ENCODE measurements at regions of chr15 and their contacts with region 1.

Region 1: DNA sequence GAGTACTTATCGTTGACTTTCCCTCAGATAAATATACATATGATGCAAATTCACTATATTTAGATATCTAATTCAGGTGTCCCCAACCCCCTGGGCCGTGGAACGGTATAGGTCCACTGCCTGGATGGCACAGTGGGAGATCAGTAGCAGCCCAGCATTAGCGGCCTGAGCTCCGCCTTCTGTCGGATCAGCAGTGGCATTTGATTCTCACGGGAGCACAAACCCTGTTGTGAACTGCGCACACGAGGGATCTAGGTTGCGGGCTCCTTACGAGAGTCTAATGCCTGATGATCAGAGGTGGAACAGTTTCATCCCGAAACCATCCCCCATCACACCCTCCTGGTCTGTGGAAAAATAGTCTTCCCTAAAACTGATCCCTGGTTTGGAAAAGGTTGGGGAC is 6.9 kb downstream of the KNL1 start:
- DNase-seq: no peak
- ATAC-seq: no peak
- H3K4me3 Mint-ChIP-seq: no peak overlapping the region
- H3K27ac Mint-ChIP-seq: no peak overlapping the region
- H3K4me1 Mint-ChIP-seq: peaks cover 2% of the 10 kb centered on the region
- H3K27me3 Mint-ChIP-seq: no peaks in the 10 kb centered on the region
- CTCF ChIP-seq: no peak

Region 2: GRCh38 chr15:40618023-40618422 is 17.1 kb after region 1 on chr15:
- CTCF ChIA-PET with region 1: no interaction called
- POLR2A ChIA-PET with region 1: interaction called, 10 read pairs
- intact Hi-C with region 1: no loop called
- DNase-seq: no peak
- ATAC-seq: no peak
- H3K4me3 Mint-ChIP-seq: no peak overlapping the region
- H3K27ac Mint-ChIP-seq: no peak overlapping the region
- H3K4me1 Mint-ChIP-seq: peaks cover 3% of the 10 kb centered on the region
- H3K27me3 Mint-ChIP-seq: no peaks in the 10 kb centered on the region
- CTCF ChIP-seq: no peak

Measured in activated B cell treated with CpG ODN at 0.5 μM for 24 hours (primary cell).